Cardiac septum (tissue), 1 donor: ENCODE measurements at regions of chr4 and their contacts with region 1.

Region 1: GRCh38 chr4:2241410-2242353 is at the starts of genes HAUS3 and POLN:
- DNase-seq: peak; percentile 100
- total RNA-seq, gene HAUS3: 5.6 TPM
- total RNA-seq, gene POLN: 2.3 TPM

Region 2: GRCh38 chr4:2255501-2256155 is 13.9 kb after region 1 on chr4:
- intact Hi-C with region 1: loop called (anchors 2 kb)
- DNase-seq: peak; percentile 78

Region 3: DNA sequence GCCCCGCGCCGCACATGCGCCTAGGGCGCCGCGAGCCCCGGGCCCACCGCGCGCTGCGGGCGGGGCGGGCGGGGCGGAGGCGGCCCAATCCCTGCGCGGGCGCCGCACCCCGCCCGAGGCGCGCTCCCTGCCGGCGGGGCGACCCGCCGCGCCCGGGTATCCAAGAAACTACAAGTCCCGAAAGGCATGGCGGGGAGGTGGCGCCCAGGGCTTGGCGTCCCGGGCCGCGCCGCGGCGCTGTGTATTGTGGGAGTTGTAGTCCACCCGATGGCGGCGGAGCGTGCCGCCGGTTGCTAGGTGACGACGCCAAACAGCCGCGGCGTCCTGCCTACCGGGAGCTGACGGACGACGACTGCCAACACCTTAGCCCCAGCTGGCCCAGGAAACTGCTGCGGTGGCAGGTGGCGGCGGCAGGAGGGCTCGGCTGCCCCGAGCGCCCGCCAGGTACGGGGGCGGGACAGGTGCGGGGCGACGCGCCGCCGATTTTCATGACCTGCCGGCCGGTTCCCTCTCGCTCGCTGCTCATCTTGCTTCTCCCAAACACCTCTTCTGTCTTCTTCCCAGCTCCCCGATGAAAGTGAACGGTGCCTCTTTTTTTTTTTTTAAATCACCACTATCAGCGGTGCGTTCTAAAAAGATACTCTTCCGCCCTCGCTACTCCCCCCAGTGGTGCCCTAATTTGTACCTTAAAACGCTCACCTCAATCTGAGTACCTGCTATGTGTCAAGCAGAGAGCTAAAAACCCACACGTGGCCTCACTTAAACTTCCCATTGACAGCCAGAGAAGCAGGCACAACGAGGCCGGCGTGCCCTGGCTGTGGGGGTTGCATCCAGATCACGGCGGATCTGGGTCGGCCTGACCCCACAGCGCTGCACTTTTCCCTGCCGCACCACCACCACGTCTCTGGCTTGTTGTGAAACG is 177.2 kb after region 1 on chr4 and contains the start of gene CFAP99:
- intact Hi-C with region 1: loop called (anchors 2 kb)
- DNase-seq: peak; percentile 98
- total RNA-seq, gene CFAP99: not detected

Region 4: GRCh38 chr4:2462218-2462991 is 220.7 kb after region 1 on chr4:
- intact Hi-C with region 1: loop called (anchors 5 kb)
- DNase-seq: peak; percentile 82